B cell (primary cell): ENCODE measurements at regions of chr7 and their contacts with region 1.

Region 1: GRCh38 chr7:12239806-12240205 is 28.7 kb downstream of the TMEM106B start:
- DNase-seq: peak; percentile 50
- ATAC-seq: peak; percentile 65
- H3K4me3 ChIP-seq: no peak overlapping the region
- H3K4me3 Mint-ChIP-seq: no peak overlapping the region
- H3K27ac ChIP-seq: no peak overlapping the region
- H3K27ac Mint-ChIP-seq: no peak overlapping the region
- H3K4me1 ChIP-seq: peaks cover 10 to 11% of the 10 kb centered on the region in 2 donors
- H3K4me1 Mint-ChIP-seq: peaks cover 21% of the 10 kb centered on the region
- H3K27me3 ChIP-seq: no peaks in the 10 kb centered on the region
- H3K27me3 Mint-ChIP-seq: no peaks in the 10 kb centered on the region
- CTCF ChIP-seq: no peak

Region 2: DNA sequence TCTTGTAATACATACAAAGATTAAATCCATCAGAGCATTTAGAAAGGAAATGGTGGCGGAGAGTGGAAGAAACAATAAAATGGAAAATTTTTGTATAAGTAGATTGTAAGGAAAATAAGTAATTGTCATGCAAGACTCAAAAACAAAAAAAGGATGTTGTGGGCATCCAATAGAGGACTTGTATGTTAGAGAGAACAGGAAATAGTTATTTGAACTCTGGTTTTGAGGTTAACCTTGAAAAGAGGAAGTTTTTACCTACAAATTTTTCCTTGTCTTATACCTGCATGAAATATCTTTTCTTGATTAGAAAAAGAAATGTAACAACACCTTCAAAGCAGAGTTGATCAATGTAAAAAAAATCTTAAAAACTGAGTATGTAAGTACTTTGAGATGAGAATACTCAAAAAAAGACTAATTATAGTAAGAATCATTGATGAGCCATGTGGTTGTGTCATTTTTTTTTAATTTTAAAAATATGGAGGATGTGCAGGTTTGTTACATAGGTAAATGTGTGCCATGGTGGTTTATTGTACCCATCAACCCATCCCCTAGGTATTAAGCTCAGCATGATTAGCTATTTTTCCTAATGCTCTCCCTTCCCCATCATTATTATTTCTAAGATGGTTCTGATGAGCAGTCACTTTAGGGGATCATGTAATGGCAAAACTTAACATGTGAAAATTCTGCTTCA is 16.8 kb before region 1 on chr7:
- CTCF ChIA-PET with region 1: no interaction called
- POLR2A ChIA-PET with region 1: no interaction called
- intact Hi-C with region 1: loop called (anchors 2 kb)
- DNase-seq: peak; percentile 61
- ATAC-seq: peak; percentile 69
- H3K4me3 ChIP-seq: no peak overlapping the region
- H3K4me3 Mint-ChIP-seq: no peak overlapping the region
- H3K27ac ChIP-seq: no peak overlapping the region
- H3K27ac Mint-ChIP-seq: no peak overlapping the region
- H3K4me1 ChIP-seq: peaks cover 8 to 16% of the 10 kb centered on the region in 2 donors
- H3K4me1 Mint-ChIP-seq: peaks cover 23% of the 10 kb centered on the region
- H3K27me3 ChIP-seq: no peaks in the 10 kb centered on the region
- H3K27me3 Mint-ChIP-seq: no peaks in the 10 kb centered on the region
- CTCF ChIP-seq: no peak

Region 3: DNA sequence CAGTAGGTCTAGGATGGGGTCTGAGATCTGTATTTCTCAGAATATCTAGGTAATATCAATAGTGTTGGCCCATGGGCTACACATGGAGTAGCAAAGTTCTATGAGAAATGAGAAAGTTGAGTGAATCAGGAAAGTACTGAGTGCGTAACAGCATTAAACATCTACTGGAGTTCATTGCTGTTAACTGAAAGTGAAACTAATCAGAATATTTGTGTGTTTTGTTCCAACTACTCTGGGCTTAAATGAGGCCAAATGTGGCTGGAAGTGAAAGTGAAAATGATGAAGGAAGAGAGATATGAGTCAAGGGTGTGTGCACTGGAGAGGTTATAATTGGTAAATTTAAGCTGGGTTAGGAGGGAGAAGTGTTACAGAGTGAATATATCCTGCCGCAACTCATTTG is 17.8 kb after region 1 on chr7:
- CTCF ChIA-PET with region 1: no interaction called
- POLR2A ChIA-PET with region 1: no interaction called
- intact Hi-C with region 1: loop called (anchors 2 kb)
- DNase-seq: peak; percentile 77
- ATAC-seq: peak; percentile 97
- H3K4me3 ChIP-seq: peak overlapping the region; percentile 4 to 63 (median 36)
- H3K4me3 Mint-ChIP-seq: no peak overlapping the region
- H3K27ac ChIP-seq: peak overlapping the region; percentile 48 to 61
- H3K27ac Mint-ChIP-seq: no peak overlapping the region
- H3K4me1 ChIP-seq: peaks cover 15 to 16% of the 10 kb centered on the region in 2 donors
- H3K4me1 Mint-ChIP-seq: no peaks in the 10 kb centered on the region
- H3K27me3 ChIP-seq: no peaks in the 10 kb centered on the region
- H3K27me3 Mint-ChIP-seq: no peaks in the 10 kb centered on the region
- CTCF ChIP-seq: no peak

Region 4: GRCh38 chr7:12337095-12337494 is 97.3 kb after region 1 on chr7:
- CTCF ChIA-PET with region 1: no interaction called
- POLR2A ChIA-PET with region 1: no interaction called
- intact Hi-C with region 1: no loop called
- DNase-seq: no peak
- ATAC-seq: no peak
- H3K4me3 ChIP-seq: no peak overlapping the region
- H3K4me3 Mint-ChIP-seq: no peak overlapping the region
- H3K27ac ChIP-seq: no peak overlapping the region
- H3K27ac Mint-ChIP-seq: no peak overlapping the region
- H3K4me1 ChIP-seq: no peaks in the 10 kb centered on the region
- H3K4me1 Mint-ChIP-seq: no peaks in the 10 kb centered on the region
- H3K27me3 ChIP-seq: no peaks in the 10 kb centered on the region
- H3K27me3 Mint-ChIP-seq: peaks cover under 1% of the 10 kb centered on the region
- CTCF ChIP-seq: no peak